ENCODE measurements at regions of chr7 and their contacts with region 1.

Region 1: DNA sequence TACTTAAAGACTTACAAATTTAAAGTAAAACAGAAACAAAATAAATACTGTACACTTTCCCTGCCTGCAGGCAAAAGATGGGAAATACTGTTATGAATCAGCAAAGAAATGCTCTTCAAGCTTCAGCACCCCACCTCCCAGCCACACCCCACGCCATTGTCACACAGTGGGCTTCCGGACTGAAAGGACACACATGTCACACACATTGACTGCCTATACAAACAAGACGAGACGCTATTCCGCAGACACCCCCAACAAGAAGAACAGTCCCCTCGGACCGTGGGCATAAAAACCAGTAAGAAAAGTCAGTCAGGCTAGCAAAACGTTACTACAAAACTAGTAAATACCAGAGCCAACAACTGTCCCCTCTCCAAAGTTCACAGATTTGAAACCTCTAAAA is 22.2 kb upstream of the PARP12 start:
- DNase-seq: peak; percentile 72
- ATAC-seq: peak; percentile 98
- H3K4me3 ChIP-seq: no peak overlapping the region
- H3K27ac ChIP-seq: no peak overlapping the region
- H3K4me1 ChIP-seq: peaks cover 15% of the 10 kb centered on the region
- H3K27me3 ChIP-seq: peaks cover 0 to 5% of the 10 kb centered on the region in 2 experiments; a peak in 2 of 4 replicates
- CTCF ChIP-seq: no peak
- EP300 ChIP-seq: peak in 1 of 2 experiments; percentile 61; a peak in 1 of 4 replicates
- POLR2A ChIP-seq: no peak
- RAD21 ChIP-seq: no peak

Region 2: GRCh38 chr7:140062528-140063299 is 22.3 kb before region 1 on chr7 and contains the start of gene PARP12:
- CTCF ChIA-PET with region 1: no interaction called
- POLR2A ChIA-PET with region 1: interaction called, 5 read pairs
- RAD21 ChIA-PET with region 1: interaction called, 3 read pairs
- SMC1A ChIA-PET with region 1: interaction called, 4 read pairs
- in situ Hi-C with region 1: no loop called
- intact Hi-C with region 1: loop called (anchors 1 kb)
- DNase-seq: peak; percentile 36
- ATAC-seq: peak; percentile 87
- H3K4me3 ChIP-seq: peak within 1 kb of the TSS; percentile 74
- H3K27ac ChIP-seq: no peak within 1 kb of the TSS; the same call in 1 of the 2 replicates
- H3K4me1 ChIP-seq: peaks cover 11% of the 10 kb centered on the region
- H3K27me3 ChIP-seq: no peaks in the 10 kb centered on the region; a peak in 2 of 4 replicates
- CTCF ChIP-seq: peak in 1 of 3 experiments; percentile 9; a peak in 1 of 6 replicates
- EP300 ChIP-seq: no peak
- POLR2A ChIP-seq: peak; percentile 81
- RAD21 ChIP-seq: no peak
- polyA plus RNA-seq, gene PARP12: 4.9 to 6.0 TPM

Region 3: DNA sequence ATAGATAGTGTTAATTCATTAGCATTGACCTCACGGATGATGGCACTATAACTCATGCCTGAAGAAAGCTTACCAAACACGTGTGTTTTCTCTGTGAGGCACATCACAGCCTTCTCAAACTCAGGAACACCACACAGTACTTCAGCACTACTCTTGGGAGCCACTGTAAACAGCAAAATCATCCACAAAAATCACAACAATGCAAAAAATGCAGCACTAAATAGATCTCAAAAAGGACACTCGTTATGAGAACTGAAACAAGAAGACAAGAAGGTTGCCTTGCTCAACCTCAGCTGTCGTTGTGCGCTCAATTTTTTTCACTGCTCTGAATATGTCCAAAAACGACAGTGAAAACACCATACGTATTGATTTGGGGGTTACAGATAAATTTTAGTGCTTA is 10.2 kb before region 1 on chr7:
- CTCF ChIA-PET with region 1: no interaction called
- POLR2A ChIA-PET with region 1: no interaction called
- RAD21 ChIA-PET with region 1: no interaction called
- SMC1A ChIA-PET with region 1: no interaction called
- in situ Hi-C with region 1: no loop called
- intact Hi-C with region 1: loop called (anchors 1 kb)
- DNase-seq: no peak
- ATAC-seq: no peak
- H3K4me3 ChIP-seq: no peak overlapping the region
- H3K27ac ChIP-seq: no peak overlapping the region
- H3K4me1 ChIP-seq: no peaks in the 10 kb centered on the region
- H3K27me3 ChIP-seq: peaks cover 0 to 6% of the 10 kb centered on the region in 2 experiments; a peak in 3 of 4 replicates
- CTCF ChIP-seq: no peak
- EP300 ChIP-seq: no peak
- POLR2A ChIP-seq: no peak
- RAD21 ChIP-seq: no peak

Measured in GM12878 (cell line).